GM23248 (cell line): ENCODE measurements at regions of chr13 and their contacts with region 1.

Region 1: GRCh38 chr13:113029487-113030258 is 60.7 kb downstream of the MCF2L start:
- DNase-seq: peak; percentile 19
- H3K4me3 ChIP-seq: no peak overlapping the region
- H3K27ac ChIP-seq: no peak overlapping the region
- H3K4me1 ChIP-seq: no peaks in the 10 kb centered on the region
- H3K27me3 ChIP-seq: peaks cover 8% of the 10 kb centered on the region; the same call in 1 of the 2 replicates

Region 2: DNA sequence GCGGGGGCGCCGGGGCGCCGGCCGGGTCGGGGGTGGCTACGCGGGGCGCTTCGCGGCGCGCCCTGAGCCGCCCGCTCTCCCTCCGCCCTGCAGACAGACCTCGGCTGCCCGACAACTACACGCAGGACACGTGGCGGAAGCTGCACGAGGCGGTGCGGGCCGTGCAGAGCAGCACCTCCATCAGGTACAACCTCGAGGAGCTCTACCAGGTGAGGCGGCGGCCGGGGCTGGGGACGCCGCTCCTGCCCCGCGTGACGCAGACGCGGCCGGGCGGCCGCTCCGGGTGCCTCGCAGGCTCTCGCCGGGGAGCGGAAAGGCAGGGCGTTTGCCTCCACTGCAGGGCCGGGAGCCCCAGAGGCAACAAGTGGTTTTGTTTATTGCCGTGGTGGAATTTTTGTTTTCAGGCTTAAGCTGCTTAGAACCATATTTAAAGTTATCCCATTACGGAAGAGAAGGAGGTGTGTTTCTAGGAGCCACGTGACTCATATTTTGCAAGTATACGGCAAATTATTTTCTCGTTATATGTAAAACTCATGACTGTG is 180.3 kb after region 1 on chr13:
- in situ Hi-C with region 1: loop called (anchors 10 kb)
- DNase-seq: peak; percentile 83
- H3K4me3 ChIP-seq: peak overlapping the region; percentile 95
- H3K27ac ChIP-seq: peak overlapping the region; percentile 97
- H3K4me1 ChIP-seq: peaks cover 37% of the 10 kb centered on the region
- H3K27me3 ChIP-seq: no peaks in the 10 kb centered on the region